OCI-LY7 (cell line): ENCODE measurements at regions of chr4 and their contacts with region 1.

Region 1: DNA sequence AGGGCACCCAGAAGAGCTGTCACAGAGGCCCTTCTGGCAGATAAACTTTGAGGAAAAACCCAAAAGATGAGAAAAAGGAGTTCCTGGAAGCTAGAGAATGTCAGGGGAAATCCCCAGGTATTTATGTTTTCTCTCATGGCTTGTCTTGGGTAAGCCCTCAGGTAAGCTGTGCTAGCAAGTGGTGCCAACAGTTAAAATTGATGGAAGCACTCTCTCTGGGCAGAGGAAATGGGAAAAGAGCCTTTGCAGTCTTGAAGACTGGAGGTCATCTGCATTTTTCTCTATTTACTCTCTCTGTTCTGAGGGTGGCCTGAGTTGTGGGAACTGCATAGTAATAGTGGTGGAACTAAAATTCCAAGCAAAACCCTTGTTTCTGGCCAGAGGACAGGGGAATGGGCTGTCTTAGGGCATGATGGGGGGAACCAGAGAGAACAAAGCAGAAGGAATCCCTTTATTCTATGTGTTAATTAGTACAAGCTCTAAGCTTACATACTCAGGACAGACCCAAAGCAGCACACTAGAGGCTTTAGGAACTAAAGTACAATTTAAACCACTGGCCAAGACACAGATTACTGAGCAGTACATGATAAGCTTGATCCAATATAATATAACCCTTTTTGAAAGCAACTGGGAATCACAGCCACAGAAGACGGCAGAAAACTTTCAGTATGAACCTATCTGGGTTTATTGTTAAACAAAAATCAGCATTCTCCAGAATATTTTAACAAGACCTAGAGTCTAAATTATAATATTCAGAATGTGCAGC is 53.3 kb upstream of the SLC10A4 start:
- DNase-seq: no peak
- H3K4me3 ChIP-seq: no peak overlapping the region
- H3K27ac ChIP-seq: no peak overlapping the region
- H3K4me1 ChIP-seq: no peaks in the 10 kb centered on the region
- CTCF ChIP-seq: no peak

Region 2: GRCh38 chr4:48315728-48316630 is 113.9 kb before region 1 on chr4:
- CTCF ChIA-PET with region 1: no interaction called
- POLR2A ChIA-PET with region 1: no interaction called
- intact Hi-C with region 1: loop called (anchors 10 kb)
- DNase-seq: peak; percentile 53
- H3K4me3 ChIP-seq: no peak overlapping the region
- H3K27ac ChIP-seq: no peak overlapping the region
- H3K4me1 ChIP-seq: no peaks in the 10 kb centered on the region
- CTCF ChIP-seq: peak; percentile 85

Region 3: GRCh38 chr4:49709775-49710174 is 1279.9 kb after region 1 on chr4:
- CTCF ChIA-PET with region 1: no interaction called
- POLR2A ChIA-PET with region 1: no interaction called
- intact Hi-C with region 1: no loop called
- DNase-seq: no peak
- H3K4me3 ChIP-seq: no peak overlapping the region
- H3K27ac ChIP-seq: no peak overlapping the region
- H3K4me1 ChIP-seq: no peaks in the 10 kb centered on the region
- CTCF ChIP-seq: no peak